Endothelial cell of umbilical vein (primary cell): ENCODE measurements at regions of chr12 and their contacts with region 1.

Region 1: DNA sequence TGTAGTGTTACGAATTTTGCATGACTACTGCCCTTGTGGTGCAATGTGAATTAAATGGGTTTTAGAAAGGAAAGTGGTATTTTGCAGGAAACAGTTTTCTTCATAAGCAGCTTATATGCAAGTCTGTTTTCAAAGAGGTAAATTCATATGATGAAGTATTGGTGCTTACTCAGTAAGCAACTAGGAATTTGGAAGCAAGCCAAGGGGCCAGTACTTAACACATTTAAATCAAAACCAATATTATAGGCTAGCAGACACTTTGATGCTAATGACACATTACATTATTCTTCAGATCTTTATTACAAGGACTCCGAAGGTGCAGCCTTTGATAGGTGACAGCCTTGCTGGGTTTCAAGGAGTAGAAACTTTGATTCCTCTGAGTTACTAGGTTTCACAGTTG is 23.1 kb downstream of the MGAT4C start:
- DNase-seq: peak; percentile 49
- H3K4me3 ChIP-seq: no peak overlapping the region
- H3K27ac ChIP-seq: no peak overlapping the region
- H3K4me1 ChIP-seq: peaks cover 32% of the 10 kb centered on the region
- H3K27me3 ChIP-seq: no peaks in the 10 kb centered on the region
- CTCF ChIP-seq: no peak
- POLR2A ChIP-seq: no peak

Region 2: DNA sequence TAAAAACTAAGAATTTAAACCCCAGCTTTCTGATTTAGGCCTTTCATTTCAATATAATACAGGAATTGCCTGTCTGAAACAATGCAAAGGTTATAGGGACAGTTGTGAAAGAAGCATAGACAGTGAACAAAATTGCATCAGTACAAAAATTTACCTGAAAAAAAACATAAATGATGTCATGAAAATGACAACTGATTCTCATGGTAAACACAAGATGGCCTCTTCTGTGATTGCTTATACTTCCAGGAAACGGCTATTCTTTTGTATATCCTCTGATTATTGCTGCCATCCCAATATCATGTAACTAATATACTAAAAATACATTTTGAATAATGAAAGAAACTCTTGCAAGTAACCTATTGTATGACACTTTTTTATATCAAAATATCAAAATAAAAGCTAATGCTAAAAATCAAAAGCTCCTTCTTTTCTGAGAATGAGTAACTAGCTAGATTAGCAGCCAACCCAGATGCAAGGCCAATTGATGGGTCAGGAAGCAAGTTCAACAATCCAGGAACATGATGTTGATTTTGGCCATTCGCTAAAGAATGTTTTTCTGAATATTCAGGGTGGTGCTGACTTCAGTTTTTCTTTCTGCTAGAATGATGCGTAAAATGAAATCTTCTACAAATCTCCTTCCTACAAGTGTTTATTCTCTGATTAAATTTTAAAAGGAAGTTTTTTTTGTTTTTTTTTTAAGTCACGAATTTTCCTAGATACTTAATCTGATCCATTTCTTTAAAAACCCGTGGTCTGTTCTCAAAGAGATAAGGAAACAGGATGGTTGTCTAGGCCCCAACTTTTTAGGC is 869.5 kb before region 1 on chr12:
- CTCF ChIA-PET with region 1: no interaction called
- POLR2A ChIA-PET with region 1: no interaction called
- dilution Hi-C with region 1: no loop called
- intact Hi-C with region 1: no loop called
- DNase-seq: peak; percentile 91
- H3K4me3 ChIP-seq: no peak overlapping the region
- H3K27ac ChIP-seq: peak overlapping the region; percentile 19
- H3K4me1 ChIP-seq: peaks cover 18% of the 10 kb centered on the region
- H3K27me3 ChIP-seq: no peaks in the 10 kb centered on the region
- CTCF ChIP-seq: no peak
- POLR2A ChIP-seq: no peak

Region 3: GRCh38 chr12:85476756-85477155 is 756.4 kb before region 1 on chr12:
- CTCF ChIA-PET with region 1: no interaction called
- POLR2A ChIA-PET with region 1: no interaction called
- dilution Hi-C with region 1: no loop called
- intact Hi-C with region 1: loop called (anchors 10 kb)
- DNase-seq: no peak
- H3K4me3 ChIP-seq: no peak overlapping the region
- H3K27ac ChIP-seq: no peak overlapping the region
- H3K4me1 ChIP-seq: no peaks in the 10 kb centered on the region
- H3K27me3 ChIP-seq: no peaks in the 10 kb centered on the region
- CTCF ChIP-seq: no peak
- POLR2A ChIP-seq: no peak

Region 4: GRCh38 chr12:85720308-85721033 is 512.7 kb before region 1 on chr12:
- CTCF ChIA-PET with region 1: no interaction called
- POLR2A ChIA-PET with region 1: no interaction called
- dilution Hi-C with region 1: no loop called
- intact Hi-C with region 1: loop called (anchors 1 kb)
- DNase-seq: peak; percentile 59
- H3K4me3 ChIP-seq: no peak overlapping the region
- H3K27ac ChIP-seq: peak overlapping the region; percentile 66
- H3K4me1 ChIP-seq: peaks cover 17% of the 10 kb centered on the region
- H3K27me3 ChIP-seq: no peaks in the 10 kb centered on the region
- CTCF ChIP-seq: no peak
- POLR2A ChIP-seq: no peak

Region 5: GRCh38 chr12:85996280-85996679 is 236.8 kb before region 1 on chr12:
- CTCF ChIA-PET with region 1: no interaction called
- POLR2A ChIA-PET with region 1: no interaction called
- dilution Hi-C with region 1: no loop called
- intact Hi-C with region 1: loop called (anchors 1 kb)
- DNase-seq: peak; percentile 81
- H3K4me3 ChIP-seq: no peak overlapping the region
- H3K27ac ChIP-seq: peak overlapping the region; percentile 52
- H3K4me1 ChIP-seq: peaks cover 13% of the 10 kb centered on the region
- H3K27me3 ChIP-seq: no peaks in the 10 kb centered on the region
- CTCF ChIP-seq: no peak
- POLR2A ChIP-seq: peak; percentile 20

Region 6: GRCh38 chr12:86275356-86275755 is 42.2 kb after region 1 on chr12:
- CTCF ChIA-PET with region 1: no interaction called
- POLR2A ChIA-PET with region 1: no interaction called
- dilution Hi-C with region 1: no loop called
- intact Hi-C with region 1: no loop called
- DNase-seq: no peak
- H3K4me3 ChIP-seq: no peak overlapping the region
- H3K27ac ChIP-seq: no peak overlapping the region
- H3K4me1 ChIP-seq: no peaks in the 10 kb centered on the region
- H3K27me3 ChIP-seq: no peaks in the 10 kb centered on the region
- CTCF ChIP-seq: no peak
- POLR2A ChIP-seq: no peak

Region 7: GRCh38 chr12:86712425-86712843 is 479.3 kb after region 1 on chr12:
- CTCF ChIA-PET with region 1: interaction called, 3 read pairs
- POLR2A ChIA-PET with region 1: no interaction called
- dilution Hi-C with region 1: no loop called
- intact Hi-C with region 1: loop called (anchors 1 kb)
- DNase-seq: peak; percentile 96
- H3K4me3 ChIP-seq: no peak overlapping the region
- H3K27ac ChIP-seq: peak overlapping the region; percentile 87
- H3K4me1 ChIP-seq: peaks cover 13% of the 10 kb centered on the region
- H3K27me3 ChIP-seq: no peaks in the 10 kb centered on the region
- CTCF ChIP-seq: no peak
- POLR2A ChIP-seq: peak; percentile 47

Region 8: DNA sequence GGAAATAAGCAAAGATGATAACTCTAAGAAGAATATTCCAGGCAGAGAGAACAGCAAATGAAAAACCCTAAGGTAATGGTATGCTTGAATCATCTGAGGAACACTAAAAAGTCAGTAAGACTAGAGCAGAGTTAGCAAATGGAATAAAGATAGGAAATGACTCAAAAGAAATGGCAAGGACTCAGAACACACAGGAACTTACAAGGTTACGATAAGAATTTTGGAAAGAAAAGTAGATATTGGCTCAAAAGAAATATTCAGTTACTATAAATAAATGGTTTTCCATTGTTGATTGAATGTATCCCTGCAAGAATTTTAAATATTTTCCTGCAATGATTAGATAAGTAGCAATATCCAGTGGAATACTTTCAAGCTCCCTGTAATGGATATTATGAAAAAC is 1090.2 kb after region 1 on chr12:
- CTCF ChIA-PET with region 1: no interaction called
- POLR2A ChIA-PET with region 1: no interaction called
- dilution Hi-C with region 1: no loop called
- intact Hi-C with region 1: loop called (anchors 5 kb)
- DNase-seq: peak; percentile 91
- H3K4me3 ChIP-seq: no peak overlapping the region
- H3K27ac ChIP-seq: peak overlapping the region; percentile 66
- H3K4me1 ChIP-seq: peaks cover 28% of the 10 kb centered on the region
- H3K27me3 ChIP-seq: no peaks in the 10 kb centered on the region
- CTCF ChIP-seq: no peak
- POLR2A ChIP-seq: no peak